ENCODE measurements at regions of chr7 and their contacts with region 1.

Region 1: DNA sequence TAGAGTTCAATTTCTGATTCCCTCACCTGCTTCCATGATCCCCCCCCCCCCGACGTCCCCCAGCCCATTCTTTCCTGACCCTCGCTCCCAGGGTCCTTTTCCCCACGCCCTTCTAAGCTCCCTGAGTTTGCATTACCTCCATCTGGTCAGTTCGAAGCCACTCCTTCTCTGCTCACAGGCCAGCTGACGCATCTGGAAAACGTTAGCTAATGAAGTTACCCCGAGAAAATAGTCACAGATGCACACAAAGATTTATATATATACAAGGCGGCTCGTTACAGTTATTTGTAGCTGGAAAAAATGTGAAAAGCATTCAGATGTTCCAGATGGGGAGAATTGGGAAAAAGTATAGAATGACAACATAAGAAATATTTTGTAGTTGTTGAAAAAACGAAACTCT is 630.0 kb upstream of the FOXK1 start:
- DNase-seq: no peak
- ATAC-seq: no peak
- H3K4me3 ChIP-seq: no peak overlapping the region
- H3K27ac ChIP-seq: no peak overlapping the region
- H3K4me1 ChIP-seq: no peaks in the 10 kb centered on the region
- H3K27me3 ChIP-seq: no peaks in the 10 kb centered on the region
- CTCF ChIP-seq: no peak
- EP300 ChIP-seq: no peak
- POLR2A ChIP-seq: no peak
- RAD21 ChIP-seq: no peak

Region 2: DNA sequence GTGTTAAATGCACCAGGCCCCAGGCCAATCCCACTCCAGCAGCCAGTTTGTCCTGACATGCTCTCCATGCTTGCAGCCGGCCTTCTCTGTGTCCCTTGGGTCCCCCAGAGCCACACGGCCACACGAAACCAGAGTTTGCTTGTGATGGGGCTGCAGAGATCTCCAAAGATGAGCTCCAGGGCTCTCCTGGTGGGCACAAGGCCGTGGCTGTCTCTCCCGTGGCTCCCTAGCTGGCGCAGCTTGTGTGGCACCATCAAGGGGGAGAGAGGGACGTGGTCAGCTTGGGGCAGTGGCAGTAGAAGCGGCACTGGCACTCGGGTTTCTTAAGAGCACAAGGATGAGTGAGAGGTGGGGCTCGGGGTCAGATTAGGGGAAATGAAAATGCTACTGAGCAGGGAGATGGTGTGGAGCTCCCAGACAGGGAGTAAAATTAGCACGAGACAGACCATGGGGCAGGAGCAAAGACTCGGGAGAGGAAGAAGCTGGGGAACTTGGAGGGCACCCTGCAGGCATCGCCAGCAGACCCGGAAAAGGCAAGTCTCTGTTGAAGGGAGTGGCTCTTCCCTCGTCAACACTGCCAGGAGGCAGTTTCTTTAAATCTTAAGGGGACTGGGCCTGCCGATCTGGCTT is 57.5 kb after region 1 on chr7:
- CTCF ChIA-PET with region 1: no interaction called
- POLR2A ChIA-PET with region 1: no interaction called
- RAD21 ChIA-PET with region 1: no interaction called
- SMC1A ChIA-PET with region 1: no interaction called
- in situ Hi-C with region 1: loop called (anchors 10 kb)
- intact Hi-C with region 1: no loop called
- DNase-seq: no peak
- ATAC-seq: no peak
- H3K4me3 ChIP-seq: no peak overlapping the region
- H3K27ac ChIP-seq: no peak overlapping the region
- H3K4me1 ChIP-seq: no peaks in the 10 kb centered on the region
- H3K27me3 ChIP-seq: no peaks in the 10 kb centered on the region
- CTCF ChIP-seq: no peak
- EP300 ChIP-seq: no peak
- POLR2A ChIP-seq: no peak
- RAD21 ChIP-seq: no peak

Measured in GM12878 (cell line).